ENCODE measurements at regions of chr1 and their contacts with region 1.

Region 1: DNA sequence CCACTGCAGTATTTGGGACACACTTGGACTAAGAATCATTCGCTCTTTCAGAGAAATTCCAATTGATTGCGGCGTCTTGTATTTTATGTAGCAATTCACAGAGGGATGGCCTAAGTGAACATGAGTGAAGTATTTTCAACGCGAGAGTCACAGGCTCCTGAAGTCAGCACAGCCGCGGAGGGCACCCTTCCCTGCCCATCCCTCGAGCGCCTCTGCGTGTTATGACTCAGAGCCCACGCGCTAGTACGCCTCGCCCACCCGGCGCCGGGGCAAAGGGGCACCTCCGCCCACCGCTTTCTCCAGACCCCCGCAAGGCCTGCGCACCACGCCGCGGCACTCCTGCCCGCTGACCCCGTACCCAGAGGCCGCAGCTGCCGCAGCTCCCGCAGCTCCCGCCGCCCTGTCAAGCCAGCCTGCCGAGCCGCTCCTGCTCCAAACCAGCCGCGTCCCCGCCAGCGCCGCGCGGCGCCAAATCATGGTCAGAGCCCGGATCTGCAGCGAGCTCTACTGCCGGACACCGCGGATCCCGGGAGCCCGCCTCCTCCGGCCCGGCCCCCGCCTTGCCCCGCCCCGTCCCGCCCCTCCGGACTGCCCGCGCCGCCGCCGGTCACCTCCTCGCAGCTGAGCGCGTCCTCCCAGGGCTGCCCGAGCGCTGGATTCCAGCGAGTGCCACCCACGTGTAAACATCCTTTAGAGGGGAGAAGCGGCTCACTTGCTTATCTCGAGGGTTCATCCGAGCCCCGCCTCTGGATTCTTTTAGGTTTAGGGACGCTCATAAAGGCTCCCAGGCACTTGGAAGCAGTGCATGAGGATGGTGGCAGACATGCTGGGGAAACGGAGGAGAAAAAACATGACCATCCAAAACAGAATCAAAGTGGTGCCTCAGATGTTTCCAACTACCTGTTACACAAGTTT is at the start of gene GLRX2:
- DNase-seq: peak; percentile 56 to 76
- ATAC-seq: peak; percentile 85 to 93 (median 92)
- H3K4me3 ChIP-seq: peak within 1 kb of the TSS; percentile 82
- H3K4me3 Mint-ChIP-seq: peak within 1 kb of the TSS; percentile 94
- H3K27ac ChIP-seq: peak within 1 kb of the TSS; percentile 64
- H3K27ac Mint-ChIP-seq: peak within 1 kb of the TSS; percentile 81 to 88
- H3K4me1 ChIP-seq: peaks cover 12% of the 10 kb centered on the region
- H3K4me1 Mint-ChIP-seq: peaks cover 16 to 27% of the 10 kb centered on the region in 2 donors
- H3K27me3 ChIP-seq: no peaks in the 10 kb centered on the region
- H3K27me3 Mint-ChIP-seq: no peaks in the 10 kb centered on the region
- CTCF ChIP-seq: no peak
- total RNA-seq, gene GLRX2: 7.7 to 11.3 (median 9.5) TPM

Region 2: GRCh38 chr1:193059268-193060225 is 45.6 kb before region 1 on chr1 and contains the starts of genes RO60 and UCHL5:
- intact Hi-C with region 1: loop called (anchors 2 kb)
- DNase-seq: peak; percentile 87 to 98
- ATAC-seq: peak; percentile 85 to 96 (median 88)
- H3K4me3 ChIP-seq: peak within 1 kb of the TSS; percentile 99
- H3K4me3 Mint-ChIP-seq: peak within 1 kb of the TSS; percentile 98
- H3K27ac ChIP-seq: peak within 1 kb of the TSS; percentile 98
- H3K27ac Mint-ChIP-seq: peak within 1 kb of the TSS; percentile 98
- H3K4me1 ChIP-seq: peaks cover 14% of the 10 kb centered on the region
- H3K4me1 Mint-ChIP-seq: peaks cover 67 to 77% of the 10 kb centered on the region in 2 donors
- H3K27me3 ChIP-seq: no peaks in the 10 kb centered on the region
- H3K27me3 Mint-ChIP-seq: no peaks in the 10 kb centered on the region
- CTCF ChIP-seq: no peak
- total RNA-seq, gene RO60: 74.3 to 95.5 (median 78.9) TPM
- total RNA-seq, gene UCHL5: 44.3 to 53.9 (median 51.9) TPM

Region 3: GRCh38 chr1:193256019-193256418 is 150.9 kb after region 1 on chr1:
- intact Hi-C with region 1: no loop called
- DNase-seq: no peak
- ATAC-seq: no peak
- H3K4me3 ChIP-seq: no peak overlapping the region
- H3K4me3 Mint-ChIP-seq: no peak overlapping the region
- H3K27ac ChIP-seq: no peak overlapping the region
- H3K27ac Mint-ChIP-seq: no peak overlapping the region
- H3K4me1 ChIP-seq: no peaks in the 10 kb centered on the region
- H3K4me1 Mint-ChIP-seq: peaks cover 5% of the 10 kb centered on the region in 2 donors
- H3K27me3 ChIP-seq: no peaks in the 10 kb centered on the region
- H3K27me3 Mint-ChIP-seq: no peaks in the 10 kb centered on the region
- CTCF ChIP-seq: no peak

Measured in natural killer cell (primary cell).